ENCODE measurements at regions of chr16 and their contacts with region 1.

Region 1: DNA sequence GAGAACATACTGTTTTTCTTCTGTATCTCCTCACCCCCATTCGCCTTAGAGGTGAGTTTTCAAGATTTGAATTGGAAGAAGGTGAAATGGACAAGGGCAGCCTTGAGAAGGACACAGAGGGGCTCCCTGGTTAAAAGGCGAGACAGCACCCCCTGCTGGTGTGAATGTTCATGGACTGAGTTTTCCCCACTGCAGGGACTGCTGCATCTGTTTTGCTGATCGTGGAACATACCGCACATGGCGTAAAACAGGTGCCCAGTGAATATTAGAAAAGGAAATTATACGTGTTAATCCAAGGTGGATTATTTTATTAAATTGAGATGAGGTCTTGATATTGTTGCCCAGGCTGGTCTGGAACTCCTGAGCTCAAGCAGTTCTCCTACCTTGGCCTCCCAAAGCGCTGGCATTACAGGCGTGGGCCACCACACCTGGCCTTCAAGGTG is 54.5 kb downstream of the NDE1 start:
- DNase-seq: peak; percentile 68
- CTCF ChIP-seq: peak; percentile 75

Region 2: DNA sequence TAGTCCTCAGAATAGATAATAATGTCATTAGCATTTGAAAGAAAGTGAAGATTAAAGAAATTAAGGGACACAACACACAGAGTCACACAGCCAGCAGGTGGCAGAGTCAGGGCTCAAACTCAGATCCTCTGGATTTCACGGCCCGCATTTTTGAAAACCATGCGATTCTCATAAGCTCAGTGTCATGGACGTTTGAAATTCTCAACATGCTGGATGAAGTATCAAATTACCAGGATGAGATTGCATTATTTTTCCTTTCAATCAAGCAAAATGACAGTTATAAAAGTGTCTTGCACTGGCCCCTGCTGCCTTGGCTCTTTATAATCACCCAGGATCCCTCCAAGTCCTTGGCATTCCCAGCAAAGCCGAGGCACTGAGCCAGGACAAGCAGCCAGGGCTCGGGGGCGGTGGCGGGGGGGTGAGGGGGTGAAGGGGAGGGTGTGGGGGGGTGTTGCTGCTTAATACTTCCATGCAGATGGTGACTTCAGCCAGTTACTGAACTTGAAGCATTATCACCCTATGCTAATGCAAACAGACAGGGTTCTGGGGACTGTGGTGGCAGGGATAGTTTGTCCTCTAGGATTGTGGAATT is 276.8 kb before region 1 on chr16:
- in situ Hi-C with region 1: loop called (anchors 25 kb)
- DNase-seq: peak; percentile 51
- CTCF ChIP-seq: peak; percentile 66

Region 3: GRCh38 chr16:15899538-15900100 is 195.1 kb after region 1 on chr16:
- in situ Hi-C with region 1: no loop called
- DNase-seq: peak; percentile 31
- CTCF ChIP-seq: no peak

Region 4: GRCh38 chr16:15932939-15933338 is 228.4 kb after region 1 on chr16:
- in situ Hi-C with region 1: no loop called
- DNase-seq: no peak
- CTCF ChIP-seq: no peak

Measured in GM13977 (cell line).